Activated naive CD4-positive, alpha-beta T cell treated with anti-CD3 and anti-CD28 coated beads, Interleukin-2, amount 10 ng/mL, durations not matched to agents 7 days and 5 days (primary cell): ENCODE measurements at regions of chr1 and their contacts with region 1.

Region 1: DNA sequence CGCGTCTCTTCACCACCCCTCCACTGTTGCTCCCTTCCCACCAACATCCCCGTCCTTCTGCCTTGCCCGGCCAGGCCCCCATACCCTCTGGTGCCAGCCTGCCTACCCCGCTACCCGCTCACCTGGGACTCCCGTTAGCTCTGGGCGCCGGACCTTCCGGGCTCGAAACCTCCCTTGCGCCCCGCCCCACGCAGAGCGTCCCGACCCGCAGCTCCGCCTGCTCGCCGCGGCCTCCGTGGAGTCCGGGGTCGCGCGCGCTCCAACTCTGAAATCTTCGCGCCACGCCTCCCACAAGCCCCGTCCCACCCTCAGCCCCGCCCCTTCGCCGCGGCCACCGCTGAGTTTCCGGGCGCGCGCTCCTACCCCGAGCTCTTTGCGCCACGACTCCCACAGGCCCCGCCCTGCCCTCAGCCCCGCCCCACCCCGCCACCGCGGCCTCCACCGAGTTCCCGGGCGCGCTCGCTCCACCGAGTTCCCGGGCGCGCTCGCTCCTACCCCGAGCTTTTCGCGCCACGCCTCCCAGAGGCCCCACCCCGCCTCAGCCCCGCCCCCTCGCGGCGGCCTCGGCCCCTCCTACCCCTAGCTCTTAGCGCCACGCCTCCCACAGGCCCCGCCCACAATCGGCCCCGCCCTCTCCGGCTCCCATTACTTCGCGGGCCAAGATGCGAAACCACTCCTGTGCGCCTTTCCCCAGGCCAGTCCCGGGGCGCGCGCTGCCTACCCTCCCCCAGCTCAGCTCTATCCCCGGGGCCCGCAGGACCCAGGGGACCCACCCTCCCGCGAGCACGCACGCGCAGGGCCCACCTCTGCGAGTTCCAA is at the start of gene IFT25:
- DNase-seq: peak; percentile 98
- H3K4me3 Mint-ChIP-seq: peak within 1 kb of the TSS; percentile 97
- H3K27ac Mint-ChIP-seq: peak within 1 kb of the TSS; percentile 97
- H3K4me1 Mint-ChIP-seq: peaks cover 57% of the 10 kb centered on the region
- H3K27me3 Mint-ChIP-seq: no peaks in the 10 kb centered on the region

Region 2: GRCh38 chr1:53792806-53793205 is 152.8 kb before region 1 on chr1:
- CTCF ChIA-PET with region 1: no interaction called
- DNase-seq: no peak
- H3K4me3 Mint-ChIP-seq: no peak overlapping the region
- H3K27ac Mint-ChIP-seq: no peak overlapping the region
- H3K4me1 Mint-ChIP-seq: no peaks in the 10 kb centered on the region
- H3K27me3 Mint-ChIP-seq: no peaks in the 10 kb centered on the region

Region 3: GRCh38 chr1:53878492-53879105 is 67.0 kb before region 1 on chr1:
- CTCF ChIA-PET with region 1: interaction called, 34 read pairs
- DNase-seq: no peak
- H3K4me3 Mint-ChIP-seq: no peak overlapping the region
- H3K27ac Mint-ChIP-seq: no peak overlapping the region
- H3K4me1 Mint-ChIP-seq: no peaks in the 10 kb centered on the region
- H3K27me3 Mint-ChIP-seq: no peaks in the 10 kb centered on the region

Region 4: DNA sequence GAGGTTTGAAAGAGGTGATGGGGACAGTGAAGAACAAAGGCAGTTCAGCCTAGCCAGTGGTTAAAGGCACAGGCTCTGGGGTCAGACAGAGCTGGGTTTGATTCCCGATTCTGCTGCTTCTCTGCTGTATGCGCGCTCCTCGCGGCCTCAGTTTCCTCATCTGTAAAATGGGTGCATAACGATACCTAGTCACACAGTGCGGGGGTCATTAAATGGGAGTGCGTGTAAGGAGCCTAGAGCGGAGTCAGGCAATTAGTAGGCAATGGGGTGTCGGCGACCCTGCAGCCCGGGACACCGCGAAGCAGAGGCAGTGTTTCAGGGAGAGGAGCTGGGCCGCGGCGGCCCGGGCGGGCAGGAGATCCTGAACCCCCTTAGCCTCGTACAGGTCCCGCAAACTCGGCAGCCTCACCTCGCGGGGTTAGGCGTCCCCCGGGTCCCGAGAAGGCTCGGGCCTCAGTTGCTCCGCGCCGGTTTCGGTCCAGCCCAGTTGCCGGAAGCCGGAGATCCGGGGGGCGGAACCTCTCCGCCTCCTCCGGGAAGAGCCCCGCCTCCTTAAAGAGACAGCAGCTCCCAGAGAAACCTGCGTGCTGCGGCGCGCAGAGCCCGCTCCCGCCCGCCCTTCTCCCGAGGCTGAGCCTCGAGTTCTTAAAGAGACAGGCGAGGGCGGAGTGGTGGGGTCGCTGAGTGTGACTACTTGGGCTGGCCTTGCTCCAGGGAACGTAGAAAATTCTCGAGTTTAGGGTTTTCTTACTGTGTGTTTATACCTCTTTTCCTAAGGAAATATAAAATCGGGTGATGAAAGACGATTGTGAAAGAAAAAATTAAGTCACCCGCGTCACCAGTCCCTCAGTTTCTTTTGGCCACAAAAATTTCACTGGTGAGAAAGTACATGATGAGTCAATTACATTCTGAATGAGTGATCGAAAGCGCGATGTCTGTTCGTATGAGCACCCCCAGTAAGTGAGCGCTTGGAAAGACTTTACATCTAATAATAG is 56.0 kb before region 1 on chr1 and contains the start of gene YIPF1:
- CTCF ChIA-PET with region 1: interaction called, 10 read pairs
- DNase-seq: peak; percentile 91
- H3K4me3 Mint-ChIP-seq: peak within 1 kb of the TSS; percentile 92
- H3K27ac Mint-ChIP-seq: peak within 1 kb of the TSS; percentile 93
- H3K4me1 Mint-ChIP-seq: peaks cover 35% of the 10 kb centered on the region
- H3K27me3 Mint-ChIP-seq: peaks cover 9% of the 10 kb centered on the region